T-cell (primary cell): ENCODE measurements at regions of chr2 and their contacts with region 1.

Region 1: GRCh38 chr2:127541809-127542208 is 6.3 kb downstream of the MYO7B start:
- DNase-seq: no peak
- ATAC-seq: no peak
- H3K4me3 ChIP-seq: no peak overlapping the region
- H3K4me3 Mint-ChIP-seq: no peak overlapping the region
- H3K27ac ChIP-seq: no peak overlapping the region
- H3K27ac Mint-ChIP-seq: no peak overlapping the region
- H3K4me1 ChIP-seq: no peaks in the 10 kb centered on the region
- H3K4me1 Mint-ChIP-seq: no peaks in the 10 kb centered on the region
- H3K27me3 ChIP-seq: peaks cover 0 to 24% of the 10 kb centered on the region in 2 experiments
- H3K27me3 Mint-ChIP-seq: peaks cover 2 to 5% of the 10 kb centered on the region in 2 donors

Region 2: DNA sequence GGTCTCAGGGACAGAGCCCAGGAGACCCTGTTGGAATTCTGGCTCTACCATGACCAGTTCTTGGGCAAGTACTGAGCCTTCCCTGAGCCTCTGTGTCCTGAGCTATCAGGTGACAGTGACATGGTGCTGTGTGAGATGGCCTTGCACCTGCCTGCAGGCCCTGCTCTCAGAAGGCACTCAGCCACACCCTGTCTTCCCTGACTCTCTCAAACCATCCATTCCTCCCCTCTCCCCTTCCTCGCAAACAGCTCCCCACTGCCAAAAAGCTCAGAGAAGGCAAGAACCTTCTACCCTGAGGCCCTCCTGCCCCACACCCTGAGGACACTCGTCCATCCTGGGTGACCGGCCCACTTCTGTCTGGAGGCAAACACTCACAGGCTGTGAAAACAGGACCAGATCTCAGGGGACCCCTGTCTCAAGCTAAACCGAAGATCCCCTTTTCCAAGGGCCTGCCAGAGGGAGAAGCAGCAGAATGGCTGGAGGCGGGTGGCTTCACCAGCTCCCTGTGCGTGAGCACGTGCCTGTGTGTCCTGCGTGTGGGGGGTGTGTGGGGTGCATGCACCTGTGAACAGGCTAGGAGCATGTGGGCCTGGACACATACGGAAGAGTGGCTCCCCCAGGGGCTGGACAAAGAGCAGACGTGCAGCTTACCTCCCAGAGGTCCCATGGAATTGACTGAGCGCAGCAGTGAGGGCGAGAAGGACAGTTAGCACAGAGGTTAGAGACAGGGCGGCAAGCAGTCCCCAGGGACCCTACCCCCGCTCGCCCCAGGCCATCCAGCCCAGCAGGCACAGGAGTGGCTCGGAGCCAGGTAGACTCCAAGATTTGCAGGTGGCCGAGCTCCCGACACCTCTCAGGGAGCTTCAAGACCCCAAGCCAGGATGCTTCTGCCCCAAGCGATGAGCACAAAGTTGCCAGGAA is 488.8 kb before region 1 on chr2:
- CTCF ChIA-PET with region 1: interaction called in 1 of 2 experiments, 13 read pairs
- POLR2A ChIA-PET with region 1: no interaction called
- DNase-seq: peak in 2 of 35 experiments; percentile 1 to 3
- ATAC-seq: no peak
- H3K4me3 ChIP-seq: no peak overlapping the region
- H3K4me3 Mint-ChIP-seq: no peak overlapping the region
- H3K27ac ChIP-seq: no peak overlapping the region
- H3K27ac Mint-ChIP-seq: peak overlapping the region in 1 of 2 donors; percentile 64
- H3K4me1 ChIP-seq: peaks cover 0 to 25% of the 10 kb centered on the region in 2 experiments
- H3K4me1 Mint-ChIP-seq: peaks cover 6 to 10% (median 7%) of the 10 kb centered on the region in 3 donors
- H3K27me3 ChIP-seq: no peaks in the 10 kb centered on the region
- H3K27me3 Mint-ChIP-seq: no peaks in the 10 kb centered on the region

Region 3: GRCh38 chr2:127408004-127408806 is 133.6 kb before region 1 on chr2:
- CTCF ChIA-PET with region 1: no interaction called
- POLR2A ChIA-PET with region 1: no interaction called
- DNase-seq: peak; percentile 65 to 95 (median 77)
- ATAC-seq: peak; percentile 92 to 97 (median 94)
- H3K4me3 ChIP-seq: peak overlapping the region; percentile 10 to 39
- H3K4me3 Mint-ChIP-seq: peak overlapping the region; percentile 55 to 71 (median 67)
- H3K27ac ChIP-seq: peak overlapping the region; percentile 13
- H3K27ac Mint-ChIP-seq: no peak overlapping the region
- H3K4me1 ChIP-seq: peaks cover 0 to 11% of the 10 kb centered on the region in 2 experiments
- H3K4me1 Mint-ChIP-seq: peaks cover 11 to 32% (median 19%) of the 10 kb centered on the region in 3 donors
- H3K27me3 ChIP-seq: no peaks in the 10 kb centered on the region
- H3K27me3 Mint-ChIP-seq: no peaks in the 10 kb centered on the region